ENCODE measurements at regions of chr1 and their contacts with region 1.

Region 1: DNA sequence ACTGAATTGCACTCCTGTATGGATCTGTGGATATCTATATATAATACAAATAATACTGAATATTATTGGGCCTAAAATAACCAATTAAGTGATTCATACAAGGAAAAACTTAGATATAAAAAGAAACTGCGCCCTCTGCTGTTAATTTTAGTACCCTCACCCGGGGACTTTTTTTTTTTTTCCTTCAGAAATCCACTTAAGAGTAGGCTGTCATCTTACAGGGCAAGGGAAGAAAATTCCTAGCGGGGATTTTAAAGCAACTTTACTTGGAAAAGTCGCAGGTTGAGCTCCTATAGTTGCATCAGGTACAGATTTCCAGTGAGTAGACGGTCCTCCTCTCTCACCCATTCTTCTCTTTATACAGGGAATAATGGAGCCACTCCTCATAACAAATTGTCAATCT is 1.3 kb downstream of the NTNG1 start:
- DNase-seq: no peak
- ATAC-seq: no peak
- H3K4me3 Mint-ChIP-seq: peak overlapping the region; percentile 87
- H3K27ac Mint-ChIP-seq: no peak overlapping the region
- H3K4me1 Mint-ChIP-seq: peaks cover 28% of the 10 kb centered on the region
- H3K27me3 Mint-ChIP-seq: peaks cover 22% of the 10 kb centered on the region
- CTCF ChIP-seq: peak; percentile 70

Region 2: DNA sequence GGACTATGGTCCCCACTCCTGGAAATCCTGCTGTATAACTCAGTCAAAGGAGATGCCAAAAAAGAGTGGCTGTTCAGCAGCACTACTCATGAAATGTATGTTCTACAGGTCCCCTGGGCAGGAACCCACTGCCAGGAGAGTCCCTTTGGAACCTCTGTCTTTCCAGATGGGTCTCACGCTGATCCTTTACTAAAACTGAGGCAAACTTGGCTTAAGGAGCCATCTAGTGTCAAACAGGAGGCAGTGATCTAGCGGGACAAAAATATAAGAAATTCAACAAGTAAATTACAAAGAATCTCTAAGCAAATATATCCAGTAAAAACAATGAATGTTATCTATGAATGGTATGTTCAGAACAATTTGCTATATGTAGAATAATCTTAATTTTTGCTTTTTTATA is 166.2 kb before region 1 on chr1:
- CTCF ChIA-PET with region 1: no interaction called
- POLR2A ChIA-PET with region 1: no interaction called
- DNase-seq: no peak
- ATAC-seq: peak; percentile 82
- H3K4me3 Mint-ChIP-seq: no peak overlapping the region
- H3K27ac Mint-ChIP-seq: no peak overlapping the region
- H3K4me1 Mint-ChIP-seq: peaks cover 5% of the 10 kb centered on the region
- H3K27me3 Mint-ChIP-seq: no peaks in the 10 kb centered on the region
- CTCF ChIP-seq: no peak

Region 3: DNA sequence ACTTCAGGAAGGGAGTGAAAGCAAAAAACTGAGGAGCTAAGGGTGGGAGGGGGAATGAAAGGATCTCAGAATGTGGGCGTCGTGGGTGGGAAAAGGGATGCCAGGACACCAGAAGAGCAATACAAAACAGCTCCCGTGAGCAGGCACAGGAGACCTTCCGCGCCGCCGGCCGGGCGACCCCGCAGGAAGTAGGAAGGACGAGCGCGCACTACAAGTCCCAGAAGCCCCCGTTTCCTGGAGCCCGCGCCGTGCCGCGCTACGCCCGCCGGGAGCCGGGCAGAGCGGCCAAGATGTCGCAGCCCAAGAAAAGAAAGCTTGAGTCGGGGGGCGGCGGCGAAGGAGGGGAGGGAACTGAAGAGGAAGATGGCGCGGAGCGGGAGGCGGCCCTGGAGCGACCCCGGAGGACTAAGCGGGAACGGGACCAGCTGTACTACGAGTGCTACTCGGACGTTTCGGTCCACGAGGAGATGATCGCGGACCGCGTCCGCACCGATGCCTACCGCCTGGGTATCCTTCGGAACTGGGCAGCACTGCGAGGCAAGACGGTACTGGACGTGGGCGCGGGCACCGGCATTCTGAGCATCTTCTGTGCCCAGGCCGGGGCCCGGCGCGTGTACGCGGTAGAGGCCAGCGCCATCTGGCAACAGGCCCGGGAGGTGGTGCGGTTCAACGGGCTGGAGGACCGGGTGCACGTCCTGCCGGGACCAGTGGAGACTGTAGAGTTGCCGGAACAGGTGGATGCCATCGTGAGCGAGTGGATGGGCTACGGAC is 85.5 kb before region 1 on chr1 and contains the start of gene PRMT6:
- CTCF ChIA-PET with region 1: interaction called, 14 read pairs
- POLR2A ChIA-PET with region 1: interaction called, 10 read pairs
- DNase-seq: peak; percentile 88
- ATAC-seq: peak; percentile 95
- H3K4me3 Mint-ChIP-seq: peak within 1 kb of the TSS; percentile 90
- H3K27ac Mint-ChIP-seq: peak within 1 kb of the TSS; percentile 91
- H3K4me1 Mint-ChIP-seq: peaks cover 26% of the 10 kb centered on the region
- H3K27me3 Mint-ChIP-seq: no peaks in the 10 kb centered on the region
- CTCF ChIP-seq: no peak
- total RNA-seq, gene PRMT6: 30.7 to 35.3 TPM (median 31.1 TPM) in 3 replicates

Region 4: GRCh38 chr1:107220036-107220435 is 77.9 kb after region 1 on chr1:
- CTCF ChIA-PET with region 1: no interaction called
- POLR2A ChIA-PET with region 1: no interaction called
- DNase-seq: no peak
- ATAC-seq: no peak; the same call in 1 of the 2 replicates
- H3K4me3 Mint-ChIP-seq: no peak overlapping the region
- H3K27ac Mint-ChIP-seq: no peak overlapping the region
- H3K4me1 Mint-ChIP-seq: peaks cover 15% of the 10 kb centered on the region; the same call in 1 of the 2 replicates
- H3K27me3 Mint-ChIP-seq: no peaks in the 10 kb centered on the region
- CTCF ChIP-seq: no peak